CD4-positive, alpha-beta T cell (primary cell): ENCODE measurements at regions of chr2 and their contacts with region 1.

Region 1: DNA sequence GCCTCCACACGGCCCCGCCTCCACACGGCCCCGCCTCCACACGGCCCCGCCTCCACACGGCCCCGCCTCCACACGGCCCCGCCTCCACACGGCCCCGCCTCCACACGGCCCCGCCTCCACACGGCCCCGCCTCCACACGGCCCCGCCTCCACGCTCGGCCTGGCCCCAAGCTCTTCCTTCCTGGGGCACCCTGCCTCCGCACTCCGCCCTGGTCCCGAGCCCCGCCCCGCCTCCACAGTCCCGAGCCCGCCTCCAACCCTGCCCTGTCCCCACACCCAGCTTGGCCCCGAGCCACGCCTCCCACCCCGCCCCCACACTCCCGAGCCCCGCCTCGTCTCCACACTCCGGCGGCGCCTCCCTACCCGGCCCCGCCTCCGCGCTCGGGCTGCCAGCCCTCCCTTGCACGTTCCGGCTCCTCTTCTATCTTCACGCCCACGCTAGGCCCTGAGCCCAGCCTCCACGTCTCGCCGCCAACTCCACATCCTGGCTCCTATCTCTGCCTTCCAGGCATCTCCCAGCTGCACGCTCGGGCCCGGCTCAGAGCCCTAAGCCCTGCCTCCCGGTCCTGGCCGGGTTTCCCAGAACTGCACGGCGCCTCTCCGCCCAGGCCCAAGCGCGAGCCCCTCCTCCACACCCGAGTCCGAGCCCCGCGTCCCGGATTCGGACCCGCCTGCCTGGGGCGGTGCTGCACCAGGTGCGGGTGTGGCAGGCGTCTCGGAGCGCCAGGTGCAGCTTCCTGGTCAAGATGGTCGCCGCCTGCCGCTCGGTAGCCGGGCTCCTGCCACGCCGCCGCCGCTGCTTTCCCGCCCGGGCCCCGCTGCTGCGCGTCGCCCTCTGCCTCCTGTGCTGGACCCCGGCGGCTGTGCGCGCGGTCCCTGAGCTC is at the start of gene TMEM87B:
- DNase-seq: peak; percentile 97 to 100 (median 98)
- ATAC-seq: peak; percentile 69
- H3K4me3 ChIP-seq: peak within 1 kb of the TSS; percentile 93
- H3K4me3 Mint-ChIP-seq: peak within 1 kb of the TSS; percentile 94
- H3K27ac ChIP-seq: peak within 1 kb of the TSS; percentile 77 to 87
- H3K27ac Mint-ChIP-seq: peak within 1 kb of the TSS; percentile 89
- H3K4me1 ChIP-seq: peaks cover 35% of the 10 kb centered on the region
- H3K4me1 Mint-ChIP-seq: peaks cover 43% of the 10 kb centered on the region
- H3K27me3 ChIP-seq: no peaks in the 10 kb centered on the region
- H3K27me3 Mint-ChIP-seq: no peaks in the 10 kb centered on the region
- CTCF ChIP-seq: no peak
- total RNA-seq, gene TMEM87B: 8.9 to 12.1 TPM

Region 2: DNA sequence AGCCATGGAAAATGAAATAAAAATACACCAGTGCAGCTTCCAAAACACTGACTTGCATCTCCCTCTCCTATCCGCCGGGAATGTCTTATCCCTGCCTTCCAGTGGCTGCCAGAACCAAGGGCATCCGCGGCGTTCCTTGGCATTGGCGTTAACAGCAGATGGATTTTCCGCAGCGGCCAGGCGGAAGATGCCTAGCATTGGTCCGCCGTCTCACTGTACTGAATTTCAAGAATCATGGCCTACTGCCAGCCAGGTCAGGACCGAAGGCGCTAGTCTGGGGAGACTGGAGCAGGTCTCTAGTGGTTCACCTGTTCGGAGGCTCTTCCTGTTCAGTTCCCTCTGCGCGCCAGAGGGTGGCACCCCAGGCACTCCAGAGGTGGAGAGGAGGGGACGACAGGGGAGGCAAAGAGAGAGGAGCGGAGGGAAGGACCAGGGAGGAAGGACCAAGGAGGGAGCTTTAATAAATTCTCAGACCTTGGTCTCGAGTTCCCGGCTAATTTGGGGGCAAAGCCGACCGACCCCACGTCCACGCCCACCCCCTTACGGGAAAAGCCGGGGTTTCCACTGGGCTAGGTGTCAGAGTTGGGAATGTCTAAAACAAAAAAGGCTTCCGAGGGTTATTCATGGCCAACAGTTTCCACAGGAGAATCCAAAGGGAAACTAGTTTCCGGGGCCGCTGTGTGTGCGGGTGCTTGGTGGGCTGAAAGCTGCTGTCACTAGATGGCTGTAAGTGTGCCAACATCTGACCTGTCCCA is 938.1 kb before region 1 on chr2:
- CTCF ChIA-PET with region 1: no interaction called
- POLR2A ChIA-PET with region 1: interaction called, 3 read pairs
- intact Hi-C with region 1: loop called in 1 of 2 experiments (anchors 5 kb)
- DNase-seq: peak; percentile 49 to 87 (median 66)
- ATAC-seq: peak; percentile 62
- H3K4me3 ChIP-seq: peak overlapping the region; percentile 95
- H3K4me3 Mint-ChIP-seq: peak overlapping the region; percentile 82
- H3K27ac ChIP-seq: no peak overlapping the region
- H3K27ac Mint-ChIP-seq: no peak overlapping the region
- H3K4me1 ChIP-seq: peaks cover 50% of the 10 kb centered on the region
- H3K4me1 Mint-ChIP-seq: peaks cover 33% of the 10 kb centered on the region
- H3K27me3 ChIP-seq: peaks cover 46 to 60% of the 10 kb centered on the region in 2 experiments
- H3K27me3 Mint-ChIP-seq: peaks cover 67% of the 10 kb centered on the region
- CTCF ChIP-seq: peak; percentile 79

Region 3: DNA sequence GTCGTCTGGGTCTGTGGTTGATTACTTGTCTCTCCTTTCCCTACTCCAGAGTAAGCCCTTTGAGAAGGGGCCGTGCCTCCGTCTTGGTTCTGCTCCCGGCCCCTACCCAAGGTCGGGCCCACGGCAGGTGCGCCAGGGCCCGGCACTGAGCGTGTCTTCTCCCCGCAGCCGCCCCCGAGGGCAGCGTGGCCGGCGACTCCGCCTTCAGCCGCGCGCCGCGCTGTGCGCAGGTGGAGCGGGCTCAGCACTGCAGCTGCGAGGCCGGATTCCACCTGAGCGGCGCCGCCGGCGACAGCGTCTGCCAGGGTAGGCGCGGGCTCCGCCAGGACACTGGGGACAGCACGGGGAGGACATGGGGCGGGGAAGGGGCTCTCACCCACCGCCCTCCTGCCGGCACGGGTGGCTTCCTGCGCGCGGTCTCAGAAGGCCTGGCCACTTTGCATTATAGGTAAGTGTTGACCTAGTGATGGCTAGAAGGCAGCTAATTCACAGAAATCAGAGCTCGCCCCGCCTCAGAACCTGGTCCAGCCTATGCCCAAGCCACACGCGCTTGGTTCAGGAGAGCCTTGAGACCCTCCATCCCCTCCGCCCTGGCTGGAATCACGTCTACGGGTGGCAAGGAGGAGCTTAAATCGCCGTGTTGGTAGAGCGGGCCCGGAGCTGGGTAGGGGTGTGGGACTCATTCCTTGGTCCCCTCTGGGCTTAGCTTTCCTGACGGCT is 126.6 kb after region 1 on chr2:
- CTCF ChIA-PET with region 1: no interaction called
- POLR2A ChIA-PET with region 1: interaction called, 13 read pairs
- intact Hi-C with region 1: loop called in 1 of 2 experiments (anchors 10 kb)
- DNase-seq: peak; percentile 60 to 89 (median 70)
- ATAC-seq: peak; percentile 74
- H3K4me3 ChIP-seq: peak overlapping the region; percentile 71
- H3K4me3 Mint-ChIP-seq: peak overlapping the region; percentile 96
- H3K27ac ChIP-seq: peak overlapping the region; percentile 86 to 90
- H3K27ac Mint-ChIP-seq: peak overlapping the region; percentile 94
- H3K4me1 ChIP-seq: peaks cover 55% of the 10 kb centered on the region
- H3K4me1 Mint-ChIP-seq: peaks cover 69% of the 10 kb centered on the region
- H3K27me3 ChIP-seq: no peaks in the 10 kb centered on the region
- H3K27me3 Mint-ChIP-seq: no peaks in the 10 kb centered on the region
- CTCF ChIP-seq: peak; percentile 22

Region 4: DNA sequence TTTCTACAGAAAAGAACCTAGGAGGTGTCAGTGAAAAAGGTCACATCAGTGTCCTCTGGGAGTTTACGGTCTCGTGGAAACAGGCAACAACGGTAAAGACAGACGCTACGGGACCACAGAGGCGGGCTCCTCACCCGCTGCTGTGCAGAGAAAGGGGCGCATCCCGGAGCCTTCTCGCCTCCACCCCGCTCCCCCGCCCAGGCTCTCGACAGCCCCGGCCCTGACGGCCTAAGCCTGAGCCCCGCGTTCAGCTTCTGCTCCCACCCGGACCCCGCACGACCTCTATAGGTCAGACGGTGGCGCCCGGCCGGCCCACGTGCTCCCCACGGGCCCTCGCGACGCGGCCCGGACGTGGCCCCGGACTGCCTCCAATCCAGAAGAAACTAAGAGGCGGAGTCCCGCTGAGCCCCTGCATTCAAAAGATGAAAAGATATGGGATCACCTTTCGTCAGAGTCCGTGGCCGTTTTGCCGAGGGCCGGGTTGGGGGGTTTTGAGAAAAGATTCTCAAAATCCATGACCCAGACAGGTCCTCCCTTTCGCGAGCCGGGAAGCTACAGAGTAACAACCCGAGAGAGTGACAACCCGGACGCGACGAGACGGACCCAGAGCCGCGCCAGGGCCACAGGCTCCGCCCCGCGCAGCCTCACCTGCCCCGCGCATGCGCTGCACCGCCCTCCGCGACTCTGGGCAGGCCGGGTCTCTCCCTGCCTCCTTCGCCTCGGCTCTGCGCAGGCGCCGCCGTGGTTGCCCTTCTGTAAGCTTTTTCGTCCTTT is 199.6 kb after region 1 on chr2 and contains the start of gene ZC3H8:
- CTCF ChIA-PET with region 1: no interaction called
- POLR2A ChIA-PET with region 1: interaction called, 15 read pairs
- intact Hi-C with region 1: loop called in 1 of 2 experiments (anchors 5 kb)
- DNase-seq: peak; percentile 91 to 98 (median 96)
- ATAC-seq: peak; percentile 92
- H3K4me3 ChIP-seq: peak within 1 kb of the TSS; percentile 83
- H3K4me3 Mint-ChIP-seq: peak within 1 kb of the TSS; percentile 91
- H3K27ac ChIP-seq: peak within 1 kb of the TSS; percentile 92
- H3K27ac Mint-ChIP-seq: peak within 1 kb of the TSS; percentile 88
- H3K4me1 ChIP-seq: peaks cover 32% of the 10 kb centered on the region
- H3K4me1 Mint-ChIP-seq: peaks cover 21% of the 10 kb centered on the region
- H3K27me3 ChIP-seq: no peaks in the 10 kb centered on the region
- H3K27me3 Mint-ChIP-seq: no peaks in the 10 kb centered on the region
- CTCF ChIP-seq: no peak
- total RNA-seq, gene ZC3H8: 10.2 to 16.2 TPM

Region 5: GRCh38 chr2:112584134-112584890 is 529.2 kb after region 1 on chr2 and contains the start of gene CHCHD5:
- CTCF ChIA-PET with region 1: no interaction called
- POLR2A ChIA-PET with region 1: interaction called, 3 read pairs
- intact Hi-C with region 1: loop called (anchors 5 to 10 kb)
- DNase-seq: peak; percentile 83 to 98 (median 90)
- ATAC-seq: peak; percentile 86
- H3K4me3 ChIP-seq: peak within 1 kb of the TSS; percentile 89
- H3K4me3 Mint-ChIP-seq: peak within 1 kb of the TSS; percentile 94
- H3K27ac ChIP-seq: peak within 1 kb of the TSS; percentile 66 to 92
- H3K27ac Mint-ChIP-seq: peak within 1 kb of the TSS; percentile 94
- H3K4me1 ChIP-seq: peaks cover 35% of the 10 kb centered on the region
- H3K4me1 Mint-ChIP-seq: peaks cover 44% of the 10 kb centered on the region
- H3K27me3 ChIP-seq: no peaks in the 10 kb centered on the region
- H3K27me3 Mint-ChIP-seq: no peaks in the 10 kb centered on the region
- CTCF ChIP-seq: no peak
- total RNA-seq, gene CHCHD5: 13.4 to 14.3 TPM

Region 6: DNA sequence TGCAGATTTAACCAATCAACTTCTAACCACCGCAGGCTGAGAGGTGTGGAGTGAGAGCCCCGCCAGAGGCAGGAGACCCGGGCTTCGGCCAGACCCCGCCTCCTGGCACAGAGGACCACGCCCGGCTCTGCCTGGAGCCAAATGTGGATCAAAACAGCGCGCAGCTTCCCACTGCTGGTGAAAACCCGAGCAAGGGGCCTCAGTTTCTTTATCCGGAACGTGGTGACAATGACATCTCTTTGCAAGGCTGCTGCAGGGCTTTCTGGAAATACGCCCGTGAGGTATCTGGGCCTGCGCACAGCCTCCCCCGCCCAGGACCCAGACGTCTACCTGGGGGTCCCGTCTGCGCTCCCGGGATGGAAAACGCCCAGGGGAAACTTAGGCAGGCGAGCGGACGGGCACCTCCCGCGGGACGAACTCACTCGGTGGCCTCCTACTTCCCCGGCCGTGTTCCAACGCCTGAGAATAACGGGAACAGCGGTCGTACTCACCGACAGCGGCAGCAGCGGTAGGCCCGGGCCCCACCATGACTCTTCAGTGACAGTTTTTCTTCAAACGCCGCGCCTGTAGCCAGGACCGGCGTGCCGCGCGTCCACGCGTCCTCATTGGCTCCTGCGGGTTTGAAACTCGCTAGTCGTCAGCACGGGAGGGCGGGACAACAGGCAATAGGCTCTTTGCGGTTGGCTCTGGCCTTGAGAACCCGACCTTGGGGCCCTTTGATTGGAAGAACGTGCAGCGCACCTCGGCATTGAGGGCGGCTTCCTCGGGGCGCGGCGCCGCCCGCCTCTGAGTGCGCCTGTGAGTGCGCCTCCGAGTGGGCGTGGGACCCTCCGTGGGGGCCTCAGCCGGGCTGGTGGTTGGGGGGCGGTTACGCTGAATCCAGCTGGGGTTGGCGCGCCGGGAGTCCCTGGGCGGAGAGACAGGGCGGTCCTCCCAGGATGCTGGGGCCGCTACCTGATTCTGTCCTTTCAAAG is 709.3 kb after region 1 on chr2 and contains the start of gene CKAP2L:
- CTCF ChIA-PET with region 1: no interaction called
- POLR2A ChIA-PET with region 1: no interaction called
- intact Hi-C with region 1: loop called in 1 of 2 experiments (anchors 10 kb)
- DNase-seq: peak; percentile 89 to 98 (median 93)
- ATAC-seq: peak; percentile 99
- H3K4me3 ChIP-seq: peak within 1 kb of the TSS; percentile 85
- H3K4me3 Mint-ChIP-seq: peak within 1 kb of the TSS; percentile 94
- H3K27ac ChIP-seq: peak within 1 kb of the TSS in 1 of 2 donors; percentile 18
- H3K27ac Mint-ChIP-seq: peak within 1 kb of the TSS; percentile 14
- H3K4me1 ChIP-seq: peaks cover 21% of the 10 kb centered on the region
- H3K4me1 Mint-ChIP-seq: peaks cover 37% of the 10 kb centered on the region
- H3K27me3 ChIP-seq: no peaks in the 10 kb centered on the region
- H3K27me3 Mint-ChIP-seq: no peaks in the 10 kb centered on the region
- CTCF ChIP-seq: no peak
- total RNA-seq, gene CKAP2L: 0.08 to 0.50 TPM